Right ventricle myocardium superior (tissue), 1 donor: ENCODE measurements at regions of chr1 and their contacts with region 1.

Region 1: GRCh38 chr1:196160066-196160795 is 448.0 kb downstream of the KCNT2 start:
- DNase-seq: no peak
- ATAC-seq: no peak

Region 2: DNA sequence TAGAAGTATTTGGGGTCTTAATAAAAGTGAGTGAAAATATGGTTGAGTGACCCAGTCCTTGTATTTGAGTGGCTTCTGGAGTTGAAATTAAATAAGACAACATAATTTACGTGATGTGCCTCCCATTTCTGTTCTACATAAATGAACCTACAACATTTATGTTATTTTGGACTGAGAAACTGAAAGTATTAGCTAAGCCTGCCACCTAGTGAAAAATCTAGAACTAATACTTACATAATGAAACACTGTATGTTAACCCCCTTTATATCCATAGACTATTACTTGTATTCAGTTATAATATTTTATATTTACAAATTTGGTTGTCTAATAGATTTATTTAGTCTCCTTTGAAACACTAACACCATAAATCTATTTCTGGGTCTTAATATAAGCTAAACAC is 149.2 kb after region 1 on chr1:
- intact Hi-C with region 1: loop called (anchors 10 kb)
- DNase-seq: no peak
- ATAC-seq: no peak

Region 3: DNA sequence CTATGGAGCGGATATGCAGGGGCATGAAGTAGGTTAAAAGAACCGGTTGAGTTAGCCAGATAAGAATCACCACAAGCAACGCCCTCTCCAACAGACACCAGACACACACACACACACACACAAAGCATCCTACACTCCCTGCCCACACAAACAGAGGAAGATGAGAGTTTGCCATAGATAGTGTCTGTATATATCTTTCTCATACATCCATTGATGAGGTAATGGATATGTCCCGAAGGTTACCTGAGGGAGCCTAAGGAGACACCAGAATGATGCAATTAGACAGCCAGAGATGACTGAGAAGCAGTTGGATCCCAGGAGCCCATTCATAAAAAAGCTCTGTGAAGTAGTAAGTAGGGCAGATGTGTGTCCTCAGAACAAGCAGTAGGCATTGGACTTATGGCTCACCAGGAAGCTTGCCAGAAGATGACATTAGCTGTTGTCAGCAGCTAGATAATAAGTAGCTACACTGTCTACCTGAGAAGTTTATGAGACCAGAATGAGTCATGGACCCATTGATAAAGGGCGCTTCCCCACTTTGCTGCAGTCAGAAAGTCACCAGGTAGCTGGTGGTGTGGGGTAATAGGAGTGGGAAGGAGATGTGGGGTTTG is 201.0 kb after region 1 on chr1:
- intact Hi-C with region 1: no loop called
- DNase-seq: no peak
- ATAC-seq: no peak